A673 (cell line): ENCODE measurements at regions of chr6 and their contacts with region 1.

Region 1: GRCh38 chr6:111642463-111643158 is 36.9 kb upstream of the TRAF3IP2 start:
- DNase-seq: peak; percentile 73
- H3K4me3 ChIP-seq: no peak overlapping the region
- H3K27ac ChIP-seq: no peak overlapping the region
- H3K4me1 ChIP-seq: no peaks in the 10 kb centered on the region
- H3K27me3 ChIP-seq: no peaks in the 10 kb centered on the region
- CTCF ChIP-seq: peak; percentile 81

Region 2: DNA sequence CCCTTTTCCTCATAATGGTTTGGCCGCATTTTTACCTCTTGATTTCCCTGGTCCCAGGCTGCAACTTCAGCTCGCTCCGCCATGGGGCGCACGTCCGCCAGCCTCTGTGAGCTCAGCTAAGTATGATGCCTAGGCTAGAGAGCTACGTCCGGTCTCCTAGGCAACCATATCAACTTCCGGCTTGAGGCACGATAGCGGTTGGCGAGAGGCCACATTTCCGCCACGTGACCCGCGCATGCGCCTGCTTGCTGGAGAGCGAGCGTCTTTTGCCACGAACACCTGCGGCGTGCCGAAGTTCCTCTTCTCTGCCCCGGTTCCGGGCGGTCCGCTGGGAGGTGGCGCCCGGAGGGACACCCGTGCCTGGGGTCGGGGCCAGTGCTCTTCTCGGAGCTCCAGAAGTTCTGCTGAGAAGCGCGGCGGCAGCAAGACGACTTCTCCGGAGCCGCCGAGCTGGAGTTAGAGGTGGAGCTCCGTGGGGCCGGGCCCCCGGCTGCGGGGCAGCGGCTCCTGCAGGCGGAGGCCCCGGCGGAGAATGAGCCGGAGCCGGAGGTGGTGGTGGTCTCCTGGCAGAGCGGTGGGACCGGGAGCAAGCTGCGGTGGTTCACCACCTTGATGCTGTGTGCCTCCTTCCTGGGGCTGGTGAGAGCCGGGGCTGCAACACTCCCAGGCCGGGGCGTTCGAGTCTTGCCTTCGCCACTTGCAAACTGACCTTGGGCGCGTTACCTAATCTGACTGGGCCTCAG is 383.4 kb before region 1 on chr6:
- CTCF ChIA-PET with region 1: interaction called, 15 read pairs
- POLR2A ChIA-PET with region 1: no interaction called
- intact Hi-C with region 1: loop called (anchors 2 kb)
- DNase-seq: peak; percentile 99
- H3K4me3 ChIP-seq: peak overlapping the region; percentile 84
- H3K27ac ChIP-seq: peak overlapping the region; percentile 75
- H3K4me1 ChIP-seq: no peaks in the 10 kb centered on the region
- H3K27me3 ChIP-seq: no peaks in the 10 kb centered on the region
- CTCF ChIP-seq: peak; percentile 97

Region 3: GRCh38 chr6:111361648-111362047 is 281.0 kb before region 1 on chr6:
- CTCF ChIA-PET with region 1: interaction called, 5 read pairs
- POLR2A ChIA-PET with region 1: no interaction called
- intact Hi-C with region 1: loop called (anchors 5 kb)
- DNase-seq: peak; percentile 67
- H3K4me3 ChIP-seq: no peak overlapping the region
- H3K27ac ChIP-seq: no peak overlapping the region
- H3K4me1 ChIP-seq: no peaks in the 10 kb centered on the region
- H3K27me3 ChIP-seq: no peaks in the 10 kb centered on the region
- CTCF ChIP-seq: peak; percentile 61